Stomach (tissue), 19 donors: ENCODE measurements at regions of chr4 and their contacts with region 1.

Region 1: GRCh38 chr4:94621491-94622080 is 136.2 kb upstream of the BMPR1B start:
- DNase-seq: peak in 1 of 2 donors; percentile 74
- H3K4me3 ChIP-seq: no peak overlapping the region
- H3K27ac ChIP-seq: no peak overlapping the region
- H3K4me1 ChIP-seq: peaks cover 0 to 4% (median 0%) of the 10 kb centered on the region in 4 donors
- H3K27me3 ChIP-seq: no peaks in the 10 kb centered on the region
- CTCF ChIP-seq: peak in 5 of 7 experiments; percentile 47 to 85 (median 59)
- EP300 ChIP-seq: no peak
- POLR2A ChIP-seq: no peak

Region 2: GRCh38 chr4:95124906-95125504 is 503.4 kb after region 1 on chr4:
- intact Hi-C with region 1: loop called (anchors 10 kb)
- DNase-seq: peak in 1 of 2 donors; percentile 78
- H3K4me3 ChIP-seq: no peak overlapping the region
- H3K27ac ChIP-seq: no peak overlapping the region
- H3K4me1 ChIP-seq: no peaks in the 10 kb centered on the region
- H3K27me3 ChIP-seq: no peaks in the 10 kb centered on the region
- CTCF ChIP-seq: peak in 4 of 7 experiments; percentile 7 to 43 (median 30)
- EP300 ChIP-seq: no peak
- POLR2A ChIP-seq: no peak